HEK293 (cell line): ENCODE measurements at regions of chr19 and their contacts with region 1.

Region 1: DNA sequence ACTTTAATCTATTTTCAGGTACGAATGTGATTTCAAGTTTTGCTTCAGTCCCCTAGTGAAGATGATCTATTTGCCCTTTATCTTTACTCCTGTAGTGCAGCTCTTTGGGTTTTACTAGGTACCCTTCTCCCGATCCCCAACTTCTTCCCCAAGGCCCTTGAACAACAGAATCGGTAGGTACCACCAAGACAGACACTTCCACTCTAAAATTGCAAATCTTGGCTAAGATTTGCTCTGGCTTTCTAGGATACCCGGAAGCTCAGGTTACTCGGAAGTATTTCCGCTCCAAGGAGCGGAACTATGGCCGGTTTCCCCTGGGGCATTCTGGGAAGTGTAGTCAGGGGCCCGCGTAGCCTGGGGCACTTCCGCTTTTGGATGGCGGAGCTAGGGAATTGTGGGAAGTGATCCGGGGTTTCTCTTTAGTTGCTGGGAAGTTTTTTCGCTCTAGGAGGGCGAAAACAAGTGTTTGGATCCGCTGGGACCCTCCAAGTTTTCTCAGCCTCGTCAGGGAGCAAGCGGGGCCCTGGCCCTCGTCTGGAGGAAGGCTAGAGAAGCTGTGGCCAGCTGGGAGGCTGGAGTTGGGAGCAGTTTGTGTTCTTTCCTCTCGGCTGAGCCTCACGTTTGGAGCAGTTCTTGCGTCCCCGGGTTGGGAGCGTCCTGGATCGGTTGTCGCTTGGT is 5.1 kb upstream of the ZNF227 start:
- H3K4me3 ChIP-seq: peak overlapping the region; percentile 44
- H3K27ac ChIP-seq: peak overlapping the region; percentile 98
- H3K4me1 ChIP-seq: peaks cover 30% of the 10 kb centered on the region
- CTCF ChIP-seq: no peak

Region 2: DNA sequence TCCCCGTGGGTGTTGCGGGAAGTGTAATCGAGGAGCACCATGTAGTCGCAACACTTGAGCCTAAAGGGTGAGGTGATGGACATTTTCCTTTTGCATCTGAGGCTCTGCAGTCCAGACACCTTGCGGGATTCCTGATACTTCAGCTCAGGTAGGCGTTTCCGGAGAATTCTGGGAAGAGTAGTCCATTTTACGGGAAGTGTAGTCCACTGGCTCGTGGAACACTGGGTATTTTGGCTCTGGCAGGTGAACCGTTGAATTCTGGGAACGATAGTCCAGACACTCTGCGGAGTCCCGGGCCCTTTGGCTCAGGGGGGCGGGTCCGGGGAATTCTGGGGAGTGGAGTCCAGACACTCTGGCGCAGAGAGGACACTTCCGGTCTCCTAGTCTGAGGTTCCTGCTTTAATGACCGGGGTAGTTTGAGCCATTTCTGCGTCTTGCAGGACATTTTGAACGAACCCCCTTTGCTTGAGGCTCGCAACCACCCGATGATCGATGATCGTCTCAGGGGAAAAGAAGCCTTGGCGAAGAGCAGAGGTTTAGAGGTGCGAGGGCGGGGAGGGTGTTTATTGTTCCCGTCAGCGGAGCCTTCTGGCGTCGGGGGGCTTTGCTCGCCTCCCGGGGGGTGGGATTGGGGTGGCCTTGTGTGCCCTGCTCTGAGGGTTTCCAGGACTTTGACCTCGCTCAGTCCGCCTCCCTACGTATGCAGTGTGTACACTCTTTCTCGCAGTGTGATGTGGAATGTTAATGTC is 155.4 kb before region 1 on chr19 and contains the start of gene ZNF223:
- CTCF ChIA-PET with region 1: no interaction called
- POLR2A ChIA-PET with region 1: interaction called, 10 read pairs
- H3K4me3 ChIP-seq: peak within 1 kb of the TSS; percentile 66
- H3K27ac ChIP-seq: peak within 1 kb of the TSS; percentile 61
- H3K4me1 ChIP-seq: peaks cover 14% of the 10 kb centered on the region
- CTCF ChIP-seq: no peak; the same call in 1 of the 2 replicates

Region 3: DNA sequence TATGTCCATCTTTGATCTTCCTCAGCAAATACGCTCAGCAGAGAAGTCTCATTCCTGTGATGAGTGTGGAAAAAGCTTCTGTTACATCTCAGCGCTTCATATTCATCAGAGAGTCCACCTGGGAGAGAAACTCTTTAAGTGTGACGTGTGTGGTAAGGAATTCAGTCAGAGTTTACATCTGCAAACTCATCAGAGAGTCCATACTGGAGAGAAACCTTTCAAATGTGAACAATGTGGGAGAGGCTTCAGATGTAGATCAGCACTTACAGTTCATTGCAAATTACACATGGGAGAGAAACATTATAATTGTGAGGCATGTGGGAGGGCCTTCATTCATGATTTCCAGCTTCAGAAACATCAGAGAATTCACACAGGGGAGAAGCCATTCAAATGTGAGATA is 141.0 kb before region 1 on chr19:
- CTCF ChIA-PET with region 1: no interaction called
- POLR2A ChIA-PET with region 1: no interaction called
- H3K4me3 ChIP-seq: no peak overlapping the region
- H3K27ac ChIP-seq: no peak overlapping the region
- H3K4me1 ChIP-seq: peaks cover 1% of the 10 kb centered on the region
- CTCF ChIP-seq: no peak

Region 4: DNA sequence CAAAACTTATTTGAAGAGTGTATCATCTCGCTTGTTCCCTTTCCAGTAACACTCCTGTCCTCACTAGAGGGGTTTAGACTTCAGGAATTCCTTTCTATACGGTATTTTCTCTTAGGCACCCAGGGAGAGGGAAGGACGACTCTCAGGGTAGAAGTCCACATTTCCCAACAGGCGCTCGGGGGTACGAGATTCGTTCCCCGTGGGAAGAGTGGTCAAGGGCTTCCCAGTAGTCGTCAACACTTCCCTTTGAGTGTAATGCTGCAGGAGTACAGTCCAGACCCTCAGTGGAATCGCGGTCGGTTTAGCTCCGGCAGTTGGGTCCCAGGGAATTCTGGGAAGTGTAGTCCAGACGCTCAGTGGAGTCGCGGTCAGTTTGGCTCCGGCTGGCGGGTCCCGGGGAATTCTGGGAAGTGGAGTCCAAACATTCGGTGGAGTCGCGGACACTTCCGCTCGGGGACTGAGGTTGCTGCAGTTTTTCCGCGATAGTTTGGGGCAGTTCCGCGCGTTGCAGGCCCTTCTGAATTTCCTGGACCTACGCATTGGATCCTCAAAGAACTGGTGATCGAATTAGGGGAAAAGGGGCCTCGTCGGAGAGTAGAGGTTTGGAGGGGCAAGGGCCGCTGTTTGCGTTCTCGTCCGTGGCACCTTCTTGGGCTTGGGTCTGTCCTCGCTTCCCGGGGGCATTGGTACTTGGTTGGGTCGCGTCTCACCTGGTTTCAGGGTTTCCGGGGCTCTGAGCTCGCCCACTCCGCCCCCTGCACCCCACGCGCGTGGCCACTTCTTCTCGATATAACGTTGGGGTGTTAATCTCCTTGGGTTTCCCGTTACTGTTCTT is 113.1 kb before region 1 on chr19 and contains the start of gene ZNF224:
- CTCF ChIA-PET with region 1: no interaction called
- POLR2A ChIA-PET with region 1: interaction called, 20 read pairs
- H3K4me3 ChIP-seq: peak within 1 kb of the TSS; percentile 61
- H3K27ac ChIP-seq: peak within 1 kb of the TSS; percentile 92
- H3K4me1 ChIP-seq: peaks cover 19% of the 10 kb centered on the region; the same call in 1 of the 2 replicates
- CTCF ChIP-seq: no peak; the same call in 1 of the 2 replicates

Region 5: GRCh38 chr19:44113138-44113783 is 94.0 kb before region 1 on chr19 and contains the start of gene ZNF225:
- CTCF ChIA-PET with region 1: no interaction called
- POLR2A ChIA-PET with region 1: interaction called, 18 read pairs
- H3K4me3 ChIP-seq: peak within 1 kb of the TSS; percentile 59
- H3K27ac ChIP-seq: peak within 1 kb of the TSS; percentile 81
- H3K4me1 ChIP-seq: peaks cover 14% of the 10 kb centered on the region
- CTCF ChIP-seq: peak; percentile 79; the same call in 1 of the 2 replicates

Region 6: DNA sequence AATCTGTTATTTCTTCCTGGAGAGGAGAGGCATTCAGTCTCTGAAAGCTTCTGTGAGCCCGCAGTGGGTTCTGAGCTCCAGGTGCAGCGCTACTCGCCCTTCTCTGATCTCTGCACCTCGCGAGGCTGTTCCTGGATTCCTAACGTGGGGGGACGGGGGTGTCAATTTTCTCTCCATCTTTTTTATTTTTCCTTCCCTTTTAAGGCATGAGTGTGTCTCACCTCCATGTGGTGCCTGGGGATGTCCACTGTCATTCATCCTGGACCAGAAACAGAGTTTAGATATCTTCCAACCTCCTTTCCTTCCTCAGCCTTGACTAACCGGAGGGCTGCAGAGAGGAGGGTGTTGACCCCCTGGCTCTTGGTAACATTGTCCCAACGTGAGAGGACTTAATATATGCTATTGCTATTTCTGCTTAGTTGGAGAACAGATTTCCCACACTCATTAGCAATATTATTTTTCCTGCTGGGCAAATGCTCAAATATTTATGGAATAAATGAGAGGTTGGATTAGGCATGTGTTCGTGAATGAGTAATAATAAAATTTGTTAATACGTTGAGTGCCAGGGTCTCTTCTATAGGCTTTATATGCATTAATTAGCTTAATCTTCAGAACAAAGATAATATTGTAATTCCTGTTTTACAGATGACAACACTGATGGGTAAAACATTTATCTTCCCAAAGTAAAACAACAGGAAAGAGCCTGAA is 53.3 kb after region 1 on chr19:
- CTCF ChIA-PET with region 1: interaction called, 3 read pairs
- POLR2A ChIA-PET with region 1: interaction called, 36 read pairs
- H3K4me3 ChIP-seq: no peak overlapping the region
- H3K27ac ChIP-seq: peak overlapping the region; percentile 91
- H3K4me1 ChIP-seq: peaks cover 25% of the 10 kb centered on the region
- CTCF ChIP-seq: peak; percentile 46

Region 7: GRCh38 chr19:44304659-44305193 is 97.5 kb after region 1 on chr19 and contains the start of gene ZNF235:
- CTCF ChIA-PET with region 1: no interaction called
- POLR2A ChIA-PET with region 1: interaction called, 11 read pairs
- H3K4me3 ChIP-seq: peak within 1 kb of the TSS; percentile 58
- H3K27ac ChIP-seq: peak within 1 kb of the TSS; percentile 76
- H3K4me1 ChIP-seq: peaks cover 8% of the 10 kb centered on the region
- CTCF ChIP-seq: no peak